ENCODE measurements at regions of chr1 and their contacts with region 1.

Region 1: DNA sequence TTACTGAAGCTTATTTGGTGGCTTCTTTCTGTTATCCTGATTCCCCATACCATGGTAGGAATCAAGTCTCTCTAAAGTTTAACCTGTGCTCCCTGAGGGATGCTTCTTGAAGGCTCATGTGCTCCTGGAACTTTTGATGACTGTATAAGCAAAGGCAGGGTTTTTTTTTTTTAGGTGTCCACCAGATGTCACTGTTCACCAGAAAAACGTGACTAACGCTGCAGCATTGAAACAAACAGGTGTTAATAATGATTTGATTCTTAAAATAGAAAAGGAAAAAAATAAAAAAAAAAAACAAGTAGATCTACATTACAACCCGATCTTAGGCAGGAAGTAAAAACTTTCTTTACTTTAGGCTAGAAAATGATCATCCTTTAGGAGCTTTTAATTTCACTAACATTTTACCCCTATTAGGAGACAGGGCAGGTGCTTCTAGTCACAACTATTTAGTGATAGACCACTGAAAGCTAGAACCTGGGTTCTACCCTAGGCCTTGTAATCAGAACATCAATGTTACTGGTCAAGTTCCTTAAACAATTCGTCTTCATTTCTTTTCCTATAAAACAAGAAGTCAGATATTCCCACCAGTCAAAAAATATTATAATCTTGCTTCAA is 223.0 kb downstream of the PLA2G4A start:
- DNase-seq: peak; percentile 16
- H3K4me3 ChIP-seq: no peak overlapping the region
- H3K27ac ChIP-seq: no peak overlapping the region
- H3K4me1 ChIP-seq: peaks cover 0 to 4% of the 10 kb centered on the region in 2 experiments; a peak in 2 of 4 replicates
- H3K27me3 ChIP-seq: no peaks in the 10 kb centered on the region
- CTCF ChIP-seq: peak; percentile 76
- EP300 ChIP-seq: no peak
- RAD21 ChIP-seq: peak; percentile 84

Region 2: GRCh38 chr1:186985889-186986491 is 65.7 kb before region 1 on chr1:
- CTCF ChIA-PET with region 1: no interaction called
- POLR2A ChIA-PET with region 1: no interaction called
- DNase-seq: peak; percentile 39
- H3K4me3 ChIP-seq: no peak overlapping the region; a peak in 1 of 4 replicates
- H3K27ac ChIP-seq: no peak overlapping the region
- H3K4me1 ChIP-seq: peaks cover 0 to 2% of the 10 kb centered on the region in 2 experiments; a peak in 2 of 4 replicates
- H3K27me3 ChIP-seq: no peaks in the 10 kb centered on the region
- CTCF ChIP-seq: peak; percentile 84
- EP300 ChIP-seq: no peak
- RAD21 ChIP-seq: peak; percentile 97

Region 3: GRCh38 chr1:187067160-187067559 is 15.4 kb after region 1 on chr1:
- CTCF ChIA-PET with region 1: interaction called, 29 read pairs
- POLR2A ChIA-PET with region 1: no interaction called
- DNase-seq: peak; percentile 31
- H3K4me3 ChIP-seq: no peak overlapping the region
- H3K27ac ChIP-seq: no peak overlapping the region
- H3K4me1 ChIP-seq: peaks cover 3 to 5% of the 10 kb centered on the region in 2 experiments; a peak in 2 of 4 replicates
- H3K27me3 ChIP-seq: no peaks in the 10 kb centered on the region
- CTCF ChIP-seq: no peak
- EP300 ChIP-seq: no peak; a peak in 1 of 4 replicates
- RAD21 ChIP-seq: no peak